Heart left ventricle (tissue), 16 donors: ENCODE measurements at regions of chr17 and their contacts with region 1.

Region 1: GRCh38 chr17:19004421-19005136 is at the start of gene FAM83G:
- DNase-seq: peak; percentile 34 to 80 (median 54)
- ATAC-seq: peak in 3 of 4 donors; percentile 67 to 91 (median 72)
- H3K4me3 ChIP-seq: peak within 1 kb of the TSS; percentile 26 to 70 (median 56)
- H3K27ac ChIP-seq: peak within 1 kb of the TSS in 4 of 12 donors; percentile 33 to 66 (median 51)
- H3K4me1 ChIP-seq: peaks cover 0 to 23% (median 3%) of the 10 kb centered on the region in 12 donors
- H3K27me3 ChIP-seq: no peaks in the 10 kb centered on the region
- CTCF ChIP-seq: no peak
- POLR2A ChIP-seq: no peak
- total RNA-seq, gene FAM83G: 1.2 to 7.4 (median 1.8) TPM

Region 2: DNA sequence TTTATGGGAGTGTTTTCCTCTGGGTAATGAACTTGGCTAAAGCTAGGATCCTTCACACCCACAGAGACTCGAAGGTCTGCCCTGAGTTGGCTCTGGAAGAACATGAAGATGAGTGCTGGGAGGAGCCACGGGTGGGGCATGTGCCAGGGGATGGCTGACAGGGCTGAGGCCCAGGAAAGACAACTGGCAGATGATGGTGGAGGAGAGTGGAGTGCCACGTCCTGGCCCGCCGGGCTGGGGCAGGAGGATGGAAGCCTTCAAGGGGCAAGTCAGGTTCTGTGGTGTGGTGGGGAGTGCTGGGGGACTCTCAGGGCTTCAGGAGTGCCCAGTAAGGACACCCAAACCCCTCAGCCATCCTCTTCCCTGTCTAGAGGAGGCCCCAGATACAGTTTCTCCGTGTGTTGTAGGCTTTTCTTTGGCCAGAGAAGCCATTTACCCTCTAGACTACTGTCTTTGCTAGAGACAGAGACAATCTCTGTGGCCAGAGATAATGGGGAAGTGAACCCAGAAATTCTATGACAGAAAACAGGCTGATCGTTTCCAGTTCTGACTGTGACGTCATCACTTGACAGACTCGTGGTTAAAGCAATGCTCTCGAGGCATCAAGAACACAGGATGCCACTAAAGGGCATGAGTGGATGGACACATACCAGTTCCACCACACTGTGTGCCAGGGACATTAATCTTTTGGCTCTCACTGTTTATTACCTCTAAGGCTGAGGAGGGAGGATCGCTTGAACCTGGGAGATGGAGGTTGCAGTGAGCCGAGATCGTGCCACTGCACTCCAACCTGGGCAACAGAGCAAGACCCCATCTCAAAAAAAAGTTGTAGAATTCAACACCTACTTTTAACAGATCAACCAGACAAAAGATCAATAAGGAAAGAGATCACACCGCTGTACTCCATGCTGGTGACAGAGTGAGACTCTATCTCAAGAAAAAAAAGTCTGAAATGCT is 71.2 kb before region 1 on chr17:
- intact Hi-C with region 1: loop called in 1 of 10 experiments (anchors 2 kb)
- DNase-seq: no peak
- ATAC-seq: peak; percentile 10 to 55 (median 22)
- H3K4me3 ChIP-seq: no peak overlapping the region
- H3K27ac ChIP-seq: no peak overlapping the region
- H3K4me1 ChIP-seq: no peaks in the 10 kb centered on the region
- H3K27me3 ChIP-seq: no peaks in the 10 kb centered on the region
- CTCF ChIP-seq: no peak
- POLR2A ChIP-seq: no peak

Region 3: DNA sequence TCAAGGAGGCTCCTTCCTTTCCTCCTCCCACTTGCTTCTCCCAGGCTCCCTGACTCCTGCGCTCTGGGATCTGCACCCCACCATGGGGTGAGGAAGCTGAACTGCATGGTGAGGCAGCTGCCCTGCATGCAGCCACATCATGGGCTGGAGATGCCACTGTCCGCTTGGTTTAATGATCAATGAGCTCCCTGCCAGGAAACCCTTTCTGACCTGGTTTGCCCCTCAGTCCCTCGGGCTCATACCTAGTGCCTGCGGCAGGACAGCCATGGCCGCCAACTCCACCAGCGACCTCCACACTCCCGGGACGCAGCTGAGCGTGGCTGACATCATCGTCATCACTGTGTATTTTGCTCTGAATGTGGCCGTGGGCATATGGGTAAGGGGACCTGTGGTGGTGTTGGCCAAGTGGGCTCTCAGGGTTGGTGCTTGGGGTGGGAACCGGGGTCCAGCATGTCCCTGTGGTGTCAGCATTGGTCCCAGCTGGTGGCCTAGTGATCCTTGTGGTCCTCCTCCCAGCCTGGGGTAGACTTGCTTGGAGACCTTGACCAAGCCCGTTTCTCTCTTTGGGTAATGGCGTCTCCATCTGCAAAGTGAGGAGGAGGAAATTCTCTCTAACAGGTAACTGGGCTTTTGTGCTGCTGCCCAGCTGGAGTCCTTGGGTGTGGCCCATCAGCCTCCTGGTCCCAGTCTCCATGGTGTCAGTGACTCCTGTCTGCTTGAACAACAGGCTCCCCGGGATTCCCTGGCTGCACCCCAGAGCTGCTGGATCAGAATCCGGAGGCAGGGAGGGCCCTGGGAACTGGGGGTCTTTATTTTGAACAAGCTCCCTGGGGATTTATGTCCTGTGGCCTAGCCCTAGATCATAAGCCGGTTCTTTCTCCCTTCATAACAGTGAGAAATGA is 52.4 kb before region 1 on chr17 and contains the start of gene SLC5A10:
- intact Hi-C with region 1: loop called in 3 of 10 experiments (anchors 5 to 10 kb)
- DNase-seq: no peak
- ATAC-seq: no peak
- H3K4me3 ChIP-seq: no peak within 1 kb of the TSS
- H3K27ac ChIP-seq: no peak within 1 kb of the TSS
- H3K4me1 ChIP-seq: peaks cover 0 to 18% (median 0%) of the 10 kb centered on the region in 12 donors
- H3K27me3 ChIP-seq: no peaks in the 10 kb centered on the region
- CTCF ChIP-seq: peak in 1 of 12 donors; percentile 12
- POLR2A ChIP-seq: no peak
- total RNA-seq, gene SLC5A10: 0.11 to 0.31 TPM in 2 of 9 donors, not detected in the others

Region 4: GRCh38 chr17:18961607-18962493 is 42.7 kb before region 1 on chr17:
- intact Hi-C with region 1: loop called in 2 of 10 experiments (anchors 5 to 10 kb)
- DNase-seq: peak in 1 of 5 donors; percentile 51
- ATAC-seq: no peak
- H3K4me3 ChIP-seq: no peak overlapping the region
- H3K27ac ChIP-seq: no peak overlapping the region
- H3K4me1 ChIP-seq: peaks cover 0 to 2% (median 0%) of the 10 kb centered on the region in 12 donors
- H3K27me3 ChIP-seq: no peaks in the 10 kb centered on the region
- CTCF ChIP-seq: no peak
- POLR2A ChIP-seq: no peak